ENCODE measurements at regions of chr1 and their contacts with region 1.

Region 1: GRCh38 chr1:226778657-226779058 is 39.6 kb upstream of the ITPKB start:
- DNase-seq: peak; percentile 99
- H3K4me3 Mint-ChIP-seq: no peak overlapping the region
- H3K27ac Mint-ChIP-seq: peak overlapping the region; percentile 65
- H3K4me1 Mint-ChIP-seq: peaks cover 16% of the 10 kb centered on the region
- H3K27me3 Mint-ChIP-seq: no peaks in the 10 kb centered on the region
- CTCF ChIP-seq: no peak

Region 2: GRCh38 chr1:226589008-226589733 is 189.5 kb before region 1 on chr1:
- CTCF ChIA-PET with region 1: no interaction called
- POLR2A ChIA-PET with region 1: no interaction called
- intact Hi-C with region 1: no loop called
- DNase-seq: peak; percentile 32
- H3K4me3 Mint-ChIP-seq: no peak overlapping the region
- H3K27ac Mint-ChIP-seq: no peak overlapping the region
- H3K4me1 Mint-ChIP-seq: peaks cover 1% of the 10 kb centered on the region
- H3K27me3 Mint-ChIP-seq: peaks cover 19% of the 10 kb centered on the region
- CTCF ChIP-seq: no peak

Region 3: DNA sequence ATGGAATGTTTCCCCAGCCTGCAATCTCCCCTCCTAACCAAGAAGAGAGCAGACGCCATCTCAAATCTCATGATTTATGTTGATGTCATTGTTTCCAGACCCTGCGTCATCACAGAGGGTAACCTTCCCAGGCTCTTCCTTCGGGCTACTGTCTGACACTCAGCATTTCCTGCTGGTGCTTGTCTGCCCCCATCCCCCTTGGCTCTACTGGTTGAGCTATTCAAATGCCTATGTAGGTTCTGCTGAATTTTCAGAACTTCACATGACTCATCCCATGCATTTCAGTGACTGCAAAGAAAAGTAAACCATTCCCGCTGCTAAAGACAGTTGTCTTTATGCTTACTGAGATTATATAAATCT is 14.8 kb before region 1 on chr1:
- CTCF ChIA-PET with region 1: interaction called, 4 read pairs
- POLR2A ChIA-PET with region 1: interaction called, 37 read pairs
- intact Hi-C with region 1: no loop called
- DNase-seq: peak; percentile 97
- H3K4me3 Mint-ChIP-seq: no peak overlapping the region
- H3K27ac Mint-ChIP-seq: peak overlapping the region; percentile 4
- H3K4me1 Mint-ChIP-seq: peaks cover 37% of the 10 kb centered on the region
- H3K27me3 Mint-ChIP-seq: no peaks in the 10 kb centered on the region
- CTCF ChIP-seq: no peak

Region 4: DNA sequence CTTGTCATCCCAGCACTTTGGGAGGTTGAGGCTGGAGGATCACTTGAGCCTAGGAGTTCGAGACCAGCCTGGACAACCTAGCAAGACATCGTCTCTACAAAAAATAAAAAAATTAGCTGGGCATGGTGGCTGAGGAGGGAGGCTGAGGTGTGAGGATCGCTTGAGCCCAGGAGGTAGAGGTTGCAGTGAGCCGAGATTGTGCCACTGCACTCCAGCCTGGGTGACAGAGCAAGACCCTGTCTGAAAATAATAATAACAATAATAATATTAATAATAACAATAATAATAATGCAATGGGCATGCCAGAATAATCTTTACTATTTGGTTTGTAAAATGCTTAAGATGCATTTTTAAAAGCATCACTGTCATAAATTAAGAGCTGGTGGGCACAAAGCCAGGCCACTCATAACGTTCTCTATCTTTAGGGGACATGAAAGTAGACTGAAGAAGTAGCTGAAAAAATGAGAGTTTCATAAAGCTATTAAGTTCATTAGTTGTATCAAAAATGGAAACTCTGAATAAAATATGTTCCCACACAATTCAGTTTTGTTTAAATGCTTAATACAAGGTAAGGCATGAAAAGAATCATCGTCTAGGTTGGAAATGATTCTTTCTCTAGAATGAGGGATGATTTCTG is 12.0 kb after region 1 on chr1:
- CTCF ChIA-PET with region 1: interaction called, 3 read pairs
- POLR2A ChIA-PET with region 1: interaction called, 13 read pairs
- intact Hi-C with region 1: no loop called
- DNase-seq: no peak
- H3K4me3 Mint-ChIP-seq: no peak overlapping the region
- H3K27ac Mint-ChIP-seq: no peak overlapping the region
- H3K4me1 Mint-ChIP-seq: no peaks in the 10 kb centered on the region
- H3K27me3 Mint-ChIP-seq: peaks cover 14% of the 10 kb centered on the region
- CTCF ChIP-seq: no peak

Region 5: DNA sequence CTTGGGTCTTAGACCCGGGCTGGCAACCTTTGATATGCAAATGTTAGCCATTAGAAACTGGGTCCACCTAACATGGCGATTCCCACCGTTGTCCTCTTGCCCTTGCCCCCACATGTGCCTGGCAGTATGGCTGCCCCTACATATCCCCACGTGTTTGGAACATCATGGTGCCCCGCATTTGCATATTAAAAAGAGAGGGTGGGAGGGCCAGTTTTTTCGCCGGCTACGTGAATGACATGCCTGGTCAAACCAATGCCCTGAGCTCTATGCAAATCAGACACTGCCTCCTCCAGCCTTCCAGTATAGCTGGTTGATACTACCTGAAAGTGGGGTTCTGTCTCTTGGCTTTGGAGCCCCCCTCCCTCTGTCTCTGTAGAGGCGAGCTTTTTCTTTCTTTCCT is 406.6 kb after region 1 on chr1:
- CTCF ChIA-PET with region 1: no interaction called
- POLR2A ChIA-PET with region 1: no interaction called
- intact Hi-C with region 1: no loop called
- DNase-seq: no peak
- H3K4me3 Mint-ChIP-seq: no peak overlapping the region
- H3K27ac Mint-ChIP-seq: no peak overlapping the region
- H3K4me1 Mint-ChIP-seq: no peaks in the 10 kb centered on the region
- H3K27me3 Mint-ChIP-seq: no peaks in the 10 kb centered on the region
- CTCF ChIP-seq: no peak

Measured in MCF 10A (cell line).